Transverse colon (tissue), 4 donors: ENCODE measurements at regions of chr4 and their contacts with region 1.

Region 1: GRCh38 chr4:153705743-153706468 is 21.8 kb downstream of the TLR2 start:
- DNase-seq: no peak
- H3K4me3 ChIP-seq: no peak overlapping the region
- H3K27ac ChIP-seq: no peak overlapping the region
- H3K4me1 ChIP-seq: no peaks in the 10 kb centered on the region
- H3K27me3 ChIP-seq: no peaks in the 10 kb centered on the region
- CTCF ChIP-seq: no peak
- EP300 ChIP-seq: no peak
- POLR2A ChIP-seq: no peak

Region 2: GRCh38 chr4:153684971-153685371 is 20.9 kb before region 1 on chr4:
- in situ Hi-C with region 1: no loop called
- intact Hi-C with region 1: loop called (anchors 1 kb)
- DNase-seq: no peak
- H3K4me3 ChIP-seq: peak overlapping the region in 3 of 4 donors; percentile 49 to 80 (median 53)
- H3K27ac ChIP-seq: peak overlapping the region in 1 of 4 donors; percentile 56
- H3K4me1 ChIP-seq: peaks cover 0 to 17% (median 14%) of the 10 kb centered on the region in 4 donors
- H3K27me3 ChIP-seq: peaks cover 27% of the 10 kb centered on the region
- CTCF ChIP-seq: no peak
- EP300 ChIP-seq: no peak
- POLR2A ChIP-seq: no peak